ENCODE measurements at regions of chr2 and their contacts with region 1.

Region 1: DNA sequence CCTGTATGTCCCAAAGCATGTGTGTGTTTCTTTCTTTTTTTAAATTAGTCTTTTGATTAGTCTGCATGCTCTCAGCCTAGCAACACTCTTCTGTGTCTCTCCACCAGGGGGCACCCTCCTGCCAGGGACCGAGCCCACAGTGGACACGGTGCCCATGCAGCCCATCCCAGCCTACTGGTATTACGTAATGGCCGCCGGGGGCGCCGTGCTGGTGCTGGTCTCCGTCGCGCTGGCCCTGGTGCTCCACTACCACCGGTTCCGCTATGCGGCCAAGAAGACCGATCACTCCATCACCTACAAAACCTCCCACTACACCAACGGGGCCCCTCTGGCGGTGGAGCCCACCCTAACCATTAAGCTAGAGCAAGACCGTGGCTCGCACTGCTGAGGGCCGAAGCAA is 93.8 kb downstream of the NRP2 start:
- DNase-seq: peak; percentile 12
- H3K4me3 Mint-ChIP-seq: no peak overlapping the region
- H3K27ac Mint-ChIP-seq: no peak overlapping the region
- H3K4me1 Mint-ChIP-seq: peaks cover 9% of the 10 kb centered on the region
- H3K27me3 Mint-ChIP-seq: peaks cover 9% of the 10 kb centered on the region

Region 2: DNA sequence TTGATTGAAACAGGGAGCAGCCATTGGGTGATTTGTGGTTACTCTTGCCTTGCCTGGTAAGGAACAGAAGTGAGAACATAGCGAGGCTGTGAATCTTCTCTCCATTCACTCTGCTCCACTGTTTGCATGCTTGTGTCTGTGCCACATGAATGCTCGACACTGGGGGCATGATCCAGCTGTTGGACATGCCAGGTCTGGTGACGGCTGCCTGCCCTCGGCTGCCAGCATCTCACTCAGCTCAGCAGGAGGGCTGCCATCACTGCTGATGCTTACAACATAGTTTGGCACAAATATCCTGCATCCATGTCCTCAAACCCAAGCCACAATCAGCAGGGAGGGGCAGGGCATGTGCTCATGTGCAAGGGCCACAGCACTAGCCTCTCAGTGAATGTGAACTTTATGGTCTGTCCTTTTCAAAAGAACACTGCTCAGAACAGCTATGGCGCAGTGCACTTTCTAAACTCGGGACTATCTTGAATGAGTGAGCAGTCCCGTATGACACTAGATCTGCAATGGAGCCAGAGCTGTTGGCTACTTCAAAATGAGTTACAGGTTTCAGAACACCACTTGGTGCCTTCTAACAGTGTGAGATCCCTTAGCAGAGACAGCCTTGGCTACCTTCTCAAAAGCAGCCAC is 32.5 kb after region 1 on chr2:
- intact Hi-C with region 1: loop called (anchors 1 kb)
- DNase-seq: no peak
- H3K4me3 Mint-ChIP-seq: no peak overlapping the region
- H3K27ac Mint-ChIP-seq: no peak overlapping the region
- H3K4me1 Mint-ChIP-seq: no peaks in the 10 kb centered on the region
- H3K27me3 Mint-ChIP-seq: peaks cover 12% of the 10 kb centered on the region

Region 3: DNA sequence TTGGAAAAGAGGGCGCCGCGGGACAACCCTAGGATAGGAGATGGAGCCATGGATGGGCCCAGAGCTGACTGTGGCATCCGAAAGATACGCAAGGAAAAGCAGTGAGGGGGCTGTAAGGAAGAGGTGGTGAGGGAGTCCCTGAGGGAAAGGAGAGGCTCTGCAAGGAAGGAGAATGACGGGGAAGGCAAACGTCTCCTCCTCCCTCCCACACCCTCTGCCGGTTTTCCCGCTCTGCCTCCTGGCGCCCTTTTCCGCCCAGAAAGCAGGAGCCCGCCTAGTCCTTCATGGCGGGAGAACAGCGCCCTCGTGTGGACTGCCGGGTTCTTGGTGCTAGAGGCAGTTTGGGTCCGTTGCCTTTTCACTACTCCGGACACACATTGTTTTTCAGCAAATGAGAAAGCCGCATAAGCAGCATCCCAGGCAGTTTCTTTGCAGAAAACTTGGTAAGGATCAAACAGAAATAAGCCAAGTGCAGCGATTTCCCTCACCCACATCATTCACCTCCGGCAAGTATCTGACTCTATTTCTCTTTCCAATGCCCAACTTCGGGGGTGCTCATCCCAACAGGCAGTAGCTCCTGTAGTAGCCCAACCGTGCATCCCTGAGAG is 109.5 kb after region 1 on chr2:
- intact Hi-C with region 1: loop called (anchors 1 kb)
- DNase-seq: peak; percentile 37
- H3K4me3 Mint-ChIP-seq: no peak overlapping the region
- H3K27ac Mint-ChIP-seq: no peak overlapping the region
- H3K4me1 Mint-ChIP-seq: peaks cover 8% of the 10 kb centered on the region
- H3K27me3 Mint-ChIP-seq: peaks cover 10% of the 10 kb centered on the region

Measured in activated T-helper 1 cell treated with anti-CD3 and anti-CD28 coated beads, Interleukin-12 subunit alpha, Interleukin-12 subunit beta, Interleukin-2, Interleukin-4 antibody, amounts not matched to agents 30 ng/mL and 10 ng/mL and 1 ng/mL, durations not matched to agents 14 hours and 24 hours and 36 hours (primary cell).